ENCODE measurements at regions of chr3 and their contacts with region 1.

Region 1: GRCh38 chr3:138915503-138916498 is 31.1 kb downstream of the FOXL2 start:
- DNase-seq: peak; percentile 97
- ATAC-seq: peak; percentile 92
- H3K4me3 Mint-ChIP-seq: peak overlapping the region; percentile 66
- H3K27ac Mint-ChIP-seq: 0 out of 2 replicates have a peak overlapping the region, but pooled peaks have one; percentile 65
- H3K4me1 Mint-ChIP-seq: peaks cover 3% of the 10 kb centered on the region
- H3K27me3 Mint-ChIP-seq: peaks cover 10% of the 10 kb centered on the region
- CTCF ChIP-seq: peak; percentile 93

Region 2: DNA sequence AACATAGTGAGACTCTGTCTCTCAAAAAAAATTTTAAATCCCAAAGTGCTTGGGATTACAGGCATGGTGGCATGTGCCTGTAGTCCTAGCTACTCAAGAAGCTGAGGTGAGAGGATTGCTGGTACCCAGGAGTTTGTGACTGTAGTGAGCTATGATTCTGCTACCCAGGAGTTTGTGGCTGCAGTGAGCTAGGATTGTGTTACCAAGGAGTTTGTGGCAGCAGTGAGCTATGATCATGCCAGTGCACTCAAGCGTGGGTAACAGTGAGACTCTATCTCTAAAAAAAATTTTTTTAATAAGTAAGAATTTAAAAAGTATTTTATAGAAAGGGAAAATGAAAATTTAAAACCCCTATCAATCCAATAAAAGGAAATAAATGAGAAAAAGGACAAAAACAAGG is 237.7 kb before region 1 on chr3:
- CTCF ChIA-PET with region 1: interaction called, 13 read pairs
- POLR2A ChIA-PET with region 1: no interaction called
- DNase-seq: no peak
- ATAC-seq: no peak
- H3K4me3 Mint-ChIP-seq: no peak overlapping the region
- H3K27ac Mint-ChIP-seq: no peak overlapping the region
- H3K4me1 Mint-ChIP-seq: peaks cover 13% of the 10 kb centered on the region
- H3K27me3 Mint-ChIP-seq: no peaks in the 10 kb centered on the region
- CTCF ChIP-seq: no peak

Region 3: GRCh38 chr3:138726946-138727730 is 188.7 kb before region 1 on chr3:
- CTCF ChIA-PET with region 1: interaction called, 28 read pairs
- POLR2A ChIA-PET with region 1: no interaction called
- DNase-seq: no peak
- ATAC-seq: no peak
- H3K4me3 Mint-ChIP-seq: no peak overlapping the region
- H3K27ac Mint-ChIP-seq: peak overlapping the region; percentile 28; the same call in 1 of the 2 replicates
- H3K4me1 Mint-ChIP-seq: peaks cover 10% of the 10 kb centered on the region
- H3K27me3 Mint-ChIP-seq: no peaks in the 10 kb centered on the region
- CTCF ChIP-seq: no peak

Region 4: DNA sequence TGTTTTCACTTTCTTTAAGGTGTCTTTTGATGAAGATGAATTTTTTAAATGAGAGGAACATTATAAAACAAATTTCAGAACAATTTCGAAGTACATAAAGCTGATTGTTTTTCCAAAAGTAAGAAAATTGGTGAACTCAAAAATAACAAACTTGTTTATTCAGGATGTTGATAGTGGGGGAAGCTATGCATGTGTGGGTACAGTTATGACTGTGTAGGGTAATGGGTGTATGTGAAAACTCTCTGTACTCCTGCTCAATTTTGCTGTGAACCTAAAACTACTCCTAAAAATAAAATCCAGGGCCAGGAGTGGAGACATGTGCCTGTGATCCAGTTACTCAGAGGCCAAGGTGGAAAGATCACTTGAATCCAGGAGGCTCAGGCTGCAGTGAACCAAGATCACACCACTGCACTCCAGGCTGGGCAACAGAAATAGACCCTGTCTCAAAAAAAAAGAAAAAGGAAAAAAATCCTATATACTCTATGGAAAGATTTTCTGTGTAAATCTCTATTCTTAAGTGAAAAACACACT is 118.2 kb before region 1 on chr3:
- CTCF ChIA-PET with region 1: interaction called, 30 read pairs
- POLR2A ChIA-PET with region 1: no interaction called
- DNase-seq: no peak
- ATAC-seq: no peak
- H3K4me3 Mint-ChIP-seq: no peak overlapping the region
- H3K27ac Mint-ChIP-seq: peak overlapping the region; percentile 32
- H3K4me1 Mint-ChIP-seq: peaks cover 8% of the 10 kb centered on the region; the same call in 1 of the 2 replicates
- H3K27me3 Mint-ChIP-seq: no peaks in the 10 kb centered on the region
- CTCF ChIP-seq: no peak

Region 5: GRCh38 chr3:138842483-138843188 is 73.2 kb before region 1 on chr3:
- CTCF ChIA-PET with region 1: interaction called, 58 read pairs
- POLR2A ChIA-PET with region 1: interaction called, 5 read pairs
- DNase-seq: no peak
- ATAC-seq: peak; percentile 18; the same call in 1 of the 2 replicates
- H3K4me3 Mint-ChIP-seq: no peak overlapping the region
- H3K27ac Mint-ChIP-seq: peak overlapping the region; percentile 92
- H3K4me1 Mint-ChIP-seq: peaks cover 43% of the 10 kb centered on the region
- H3K27me3 Mint-ChIP-seq: no peaks in the 10 kb centered on the region
- CTCF ChIP-seq: no peak

Region 6: DNA sequence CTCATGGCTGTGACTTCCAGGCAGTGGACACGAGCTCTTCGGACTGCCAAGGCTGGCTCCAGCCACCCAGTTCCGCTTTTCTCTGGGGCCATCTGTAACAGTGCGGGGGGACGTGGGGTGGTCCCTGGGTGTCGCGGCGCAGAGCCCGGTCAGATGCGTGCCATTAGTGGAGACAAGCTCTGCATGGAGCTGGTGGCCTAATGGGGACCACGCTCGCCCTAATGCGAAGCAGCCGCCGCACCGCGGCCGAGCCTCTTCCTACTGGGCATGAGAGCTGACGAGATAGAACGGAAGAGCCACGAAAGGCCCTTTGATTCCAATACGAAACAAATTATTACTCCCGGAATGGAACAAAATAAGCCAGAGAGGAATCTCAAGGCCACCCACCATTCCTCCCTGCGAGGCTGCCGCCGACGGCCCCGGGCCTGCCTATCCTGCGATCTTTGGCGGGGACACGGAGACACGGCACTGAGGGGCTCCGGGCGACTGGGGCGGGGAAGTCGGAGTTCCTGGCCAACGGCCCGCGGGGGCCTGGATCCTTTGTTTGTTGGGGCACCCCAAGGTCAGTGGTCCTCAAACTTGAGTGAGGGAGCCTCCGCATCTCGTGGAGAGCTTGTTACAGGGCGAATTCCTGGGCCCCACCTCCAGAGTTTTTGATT is 13.1 kb after region 1 on chr3:
- CTCF ChIA-PET with region 1: interaction called, 138 read pairs
- POLR2A ChIA-PET with region 1: no interaction called
- DNase-seq: peak; percentile 9
- ATAC-seq: no peak
- H3K4me3 Mint-ChIP-seq: no peak overlapping the region
- H3K27ac Mint-ChIP-seq: no peak overlapping the region
- H3K4me1 Mint-ChIP-seq: peaks cover 12% of the 10 kb centered on the region
- H3K27me3 Mint-ChIP-seq: no peaks in the 10 kb centered on the region; the same call in 1 of the 2 replicates
- CTCF ChIP-seq: no peak

Region 7: GRCh38 chr3:139044366-139045210 is 128.8 kb after region 1 on chr3 and contains the start of gene PRR23C:
- CTCF ChIA-PET with region 1: no interaction called
- POLR2A ChIA-PET with region 1: no interaction called
- DNase-seq: peak; percentile 14
- ATAC-seq: peak; percentile 73
- H3K4me3 Mint-ChIP-seq: no peak within 1 kb of the TSS
- H3K27ac Mint-ChIP-seq: no peak within 1 kb of the TSS
- H3K4me1 Mint-ChIP-seq: no peaks in the 10 kb centered on the region
- H3K27me3 Mint-ChIP-seq: no peaks in the 10 kb centered on the region; the same call in 1 of the 2 replicates
- CTCF ChIP-seq: no peak
- total RNA-seq, gene PRR23C: not detected in 3 replicates